IMR-90 (cell line): ENCODE measurements at regions of chr12 and their contacts with region 1.

Region 1: GRCh38 chr12:78898416-78898815 is 33.8 kb downstream of the SYT1 start:
- DNase-seq: no peak
- ATAC-seq: no peak
- H3K4me3 ChIP-seq: no peak overlapping the region
- H3K27ac ChIP-seq: no peak overlapping the region
- H3K4me1 ChIP-seq: no peaks in the 10 kb centered on the region
- H3K27me3 ChIP-seq: no peaks in the 10 kb centered on the region
- CTCF ChIP-seq: no peak
- POLR2A ChIP-seq: no peak
- RAD21 ChIP-seq: no peak

Region 2: DNA sequence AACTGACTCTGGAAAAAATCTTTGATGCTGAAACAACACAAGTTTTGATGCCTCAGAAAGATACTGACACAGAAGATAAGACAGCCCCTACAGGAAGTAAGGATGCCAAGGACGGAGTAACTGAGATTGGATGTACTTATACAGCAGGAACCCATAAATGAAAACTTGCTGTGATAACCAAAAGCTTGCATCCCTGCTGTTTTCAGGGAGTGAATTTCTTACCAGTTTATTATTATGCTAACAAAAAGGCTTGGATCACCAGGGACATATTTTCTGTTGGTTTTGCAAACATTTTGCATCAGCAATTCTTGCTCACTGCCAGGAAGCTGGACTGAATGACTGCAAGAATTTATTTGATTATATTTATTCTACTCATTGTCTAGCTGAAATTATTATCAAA is 870.0 kb before region 1 on chr12:
- CTCF ChIA-PET with region 1: no interaction called
- POLR2A ChIA-PET with region 1: no interaction called
- dilution Hi-C with region 1: no loop called
- in situ Hi-C with region 1: no loop called
- intact Hi-C with region 1: loop called (anchors 10 kb)
- DNase-seq: no peak
- ATAC-seq: no peak
- H3K4me3 ChIP-seq: no peak overlapping the region
- H3K27ac ChIP-seq: no peak overlapping the region
- H3K4me1 ChIP-seq: peaks cover under 1% of the 10 kb centered on the region; the same call in 1 of the 2 replicates
- H3K27me3 ChIP-seq: no peaks in the 10 kb centered on the region
- CTCF ChIP-seq: no peak
- POLR2A ChIP-seq: no peak
- RAD21 ChIP-seq: no peak

Region 3: GRCh38 chr12:78617683-78618082 is 280.7 kb before region 1 on chr12:
- CTCF ChIA-PET with region 1: no interaction called
- POLR2A ChIA-PET with region 1: no interaction called
- dilution Hi-C with region 1: no loop called
- in situ Hi-C with region 1: no loop called
- intact Hi-C with region 1: no loop called
- DNase-seq: no peak
- ATAC-seq: no peak
- H3K4me3 ChIP-seq: no peak overlapping the region
- H3K27ac ChIP-seq: no peak overlapping the region
- H3K4me1 ChIP-seq: no peaks in the 10 kb centered on the region
- H3K27me3 ChIP-seq: no peaks in the 10 kb centered on the region
- CTCF ChIP-seq: no peak
- POLR2A ChIP-seq: no peak
- RAD21 ChIP-seq: no peak

Region 4: DNA sequence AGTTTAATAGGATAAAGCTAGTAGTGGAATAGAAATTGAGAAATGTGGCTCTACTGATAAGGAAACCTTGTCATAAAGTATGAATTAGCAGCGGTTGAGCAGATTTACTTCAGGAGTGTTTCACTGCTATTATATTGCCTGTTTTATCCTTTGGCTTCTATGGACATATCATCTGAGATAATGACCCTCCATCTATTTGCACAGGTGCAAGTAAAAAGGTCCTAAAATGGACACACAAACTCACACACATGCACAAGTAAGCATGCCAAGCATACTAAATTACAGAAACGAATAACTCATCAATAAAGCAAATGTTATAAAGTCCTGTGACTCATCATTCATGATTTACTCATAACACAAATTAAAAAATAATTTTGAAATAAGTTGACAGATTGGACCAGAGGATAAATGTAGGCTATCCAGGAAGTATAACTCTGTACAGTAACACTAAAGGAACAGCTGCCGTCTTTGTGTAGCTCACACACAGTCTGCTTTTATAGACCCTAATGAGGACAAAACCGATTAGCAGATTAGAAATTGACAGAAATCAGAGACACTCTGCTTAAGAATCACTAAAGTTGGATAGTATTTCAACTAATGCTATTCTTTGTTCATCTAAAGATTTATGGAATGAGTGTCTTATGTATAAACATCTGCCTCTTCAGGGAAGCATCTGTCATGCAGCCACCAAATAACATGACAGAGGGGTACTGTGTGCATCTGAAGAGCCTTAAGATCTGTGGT is 40.1 kb after region 1 on chr12:
- CTCF ChIA-PET with region 1: no interaction called
- POLR2A ChIA-PET with region 1: no interaction called
- dilution Hi-C with region 1: no loop called
- in situ Hi-C with region 1: no loop called
- intact Hi-C with region 1: loop called (anchors 5 kb)
- DNase-seq: no peak
- ATAC-seq: no peak
- H3K4me3 ChIP-seq: no peak overlapping the region
- H3K27ac ChIP-seq: no peak overlapping the region
- H3K4me1 ChIP-seq: peaks cover 3% of the 10 kb centered on the region; the same call in 1 of the 2 replicates
- H3K27me3 ChIP-seq: no peaks in the 10 kb centered on the region
- CTCF ChIP-seq: no peak
- POLR2A ChIP-seq: no peak
- RAD21 ChIP-seq: no peak